Activated CD4-positive, alpha-beta T cell treated with anti-CD3 and anti-CD28 coated beads, Interleukin-2, amount 10 ng/mL, durations not matched to agents 24 days and 14 days (primary cell): ENCODE measurements at regions of chr11 and their contacts with region 1.

Region 1: DNA sequence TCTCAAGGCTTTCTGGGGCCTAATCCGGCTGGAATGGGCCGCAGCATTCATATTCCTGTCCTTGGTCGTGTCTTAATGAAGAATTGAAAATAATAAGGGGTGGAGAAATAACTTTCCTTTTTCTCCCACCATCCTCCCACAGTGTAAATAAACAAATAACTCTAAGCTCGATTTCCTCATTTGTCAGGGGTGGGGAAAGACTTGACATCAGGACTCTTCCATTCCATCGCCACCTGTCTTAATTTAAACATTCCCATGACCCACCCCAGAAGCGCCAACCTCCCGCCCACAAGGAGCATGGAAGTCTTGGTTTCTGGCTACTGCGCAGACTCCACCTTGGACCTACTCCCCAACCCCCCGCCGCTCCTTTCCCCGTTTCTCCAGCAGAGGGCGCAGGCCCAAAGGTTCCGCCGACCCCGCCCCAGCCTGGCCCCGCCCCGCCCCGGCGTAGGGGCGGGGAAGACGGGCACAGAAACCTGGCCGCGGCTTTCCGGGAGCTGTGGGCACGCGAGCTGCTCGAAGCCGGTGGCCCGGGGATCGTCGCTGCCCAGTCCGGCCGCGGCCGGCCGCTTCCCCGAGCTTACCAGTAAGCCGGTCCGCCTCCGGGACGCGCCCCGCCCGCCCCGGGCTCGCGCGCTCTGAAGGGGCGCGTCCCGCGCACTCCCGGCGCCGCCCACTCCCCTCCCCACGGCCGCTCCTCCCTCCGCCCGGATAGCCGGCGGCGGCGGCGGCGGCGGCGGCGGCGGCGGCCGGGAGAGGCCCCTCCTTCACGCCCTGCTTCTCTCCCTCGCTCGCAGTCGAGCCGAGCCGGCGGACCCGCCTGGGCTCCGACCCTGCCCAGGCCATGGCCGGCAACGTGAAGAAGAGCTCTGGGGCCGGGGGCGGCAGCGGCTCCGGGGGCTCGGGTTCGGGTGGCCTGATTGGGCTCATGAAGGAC is at the start of gene CBL:
- DNase-seq: peak; percentile 98
- H3K4me3 Mint-ChIP-seq: peak within 1 kb of the TSS; percentile 99
- H3K27ac Mint-ChIP-seq: peak within 1 kb of the TSS; percentile 93
- H3K4me1 Mint-ChIP-seq: peaks cover 18% of the 10 kb centered on the region
- H3K27me3 Mint-ChIP-seq: no peaks in the 10 kb centered on the region
- total RNA-seq, gene CBL: 36.4 and 36.5 TPM in 2 replicates

Region 2: DNA sequence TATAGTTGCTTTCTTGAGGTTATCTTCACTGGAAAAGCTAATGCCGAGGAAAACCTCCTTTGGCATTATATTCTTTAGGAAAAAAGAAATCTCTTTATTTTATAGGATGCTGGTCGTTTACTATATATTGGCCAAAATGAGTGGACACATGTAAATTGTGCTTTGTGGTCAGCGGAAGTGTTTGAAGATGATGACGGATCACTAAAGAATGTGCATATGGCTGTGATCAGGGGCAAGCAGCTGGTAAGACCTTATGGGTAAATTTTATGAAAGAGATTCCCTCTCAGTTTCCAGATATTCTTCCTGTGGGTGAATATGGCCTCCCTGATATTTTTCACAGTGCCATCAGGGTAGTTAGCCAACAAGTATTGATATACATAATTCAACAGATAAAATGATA is 708.0 kb before region 1 on chr11:
- intact Hi-C with region 1: no loop called
- DNase-seq: no peak
- H3K4me3 Mint-ChIP-seq: no peak overlapping the region
- H3K27ac Mint-ChIP-seq: no peak overlapping the region
- H3K4me1 Mint-ChIP-seq: no peaks in the 10 kb centered on the region
- H3K27me3 Mint-ChIP-seq: no peaks in the 10 kb centered on the region

Region 3: GRCh38 chr11:119218141-119218878 is 12.5 kb after region 1 on chr11:
- intact Hi-C with region 1: loop called (anchors 1 kb)
- DNase-seq: no peak
- H3K4me3 Mint-ChIP-seq: no peak overlapping the region
- H3K27ac Mint-ChIP-seq: peak overlapping the region; percentile 26
- H3K4me1 Mint-ChIP-seq: peaks cover 23% of the 10 kb centered on the region
- H3K27me3 Mint-ChIP-seq: no peaks in the 10 kb centered on the region

Region 4: DNA sequence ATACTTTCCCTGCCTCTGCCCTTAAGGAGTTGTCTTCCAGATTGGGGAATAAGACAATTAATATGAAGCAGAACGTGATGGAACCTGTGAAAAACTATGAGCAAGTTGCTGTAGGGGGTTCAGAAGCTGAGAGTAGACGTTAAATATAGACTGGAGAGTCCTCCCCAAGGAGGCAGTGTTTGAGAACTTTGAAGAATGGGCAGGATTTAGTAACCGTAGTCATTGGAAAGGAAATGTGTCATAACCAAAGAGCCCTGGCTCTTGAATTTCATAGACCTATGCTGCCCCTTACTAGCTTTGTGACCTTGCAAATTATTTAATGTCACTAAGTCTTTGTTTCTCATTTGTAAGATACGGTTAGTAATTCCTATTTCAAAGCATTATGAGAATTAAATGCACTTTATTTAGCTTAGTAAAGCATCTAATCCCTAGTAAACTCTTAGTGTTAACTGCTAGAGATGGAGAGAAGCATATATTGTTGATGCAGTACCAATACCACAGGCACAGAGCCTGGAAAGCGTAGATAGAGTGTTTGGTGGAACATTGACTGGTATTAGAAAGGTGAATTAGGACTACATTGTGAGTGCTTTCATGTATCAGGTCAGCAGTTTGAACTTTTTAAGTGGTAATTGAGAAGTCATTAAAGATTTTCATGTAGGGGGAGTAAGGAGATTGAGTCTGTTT is 57.0 kb after region 1 on chr11:
- intact Hi-C with region 1: loop called (anchors 1 kb)
- DNase-seq: peak; percentile 75
- H3K4me3 Mint-ChIP-seq: no peak overlapping the region
- H3K27ac Mint-ChIP-seq: no peak overlapping the region
- H3K4me1 Mint-ChIP-seq: peaks cover 47% of the 10 kb centered on the region
- H3K27me3 Mint-ChIP-seq: no peaks in the 10 kb centered on the region

Region 5: GRCh38 chr11:119284344-119285157 is 78.7 kb after region 1 on chr11:
- intact Hi-C with region 1: loop called (anchors 1 kb)
- DNase-seq: peak; percentile 78
- H3K4me3 Mint-ChIP-seq: no peak overlapping the region
- H3K27ac Mint-ChIP-seq: peak overlapping the region; percentile 48
- H3K4me1 Mint-ChIP-seq: peaks cover 26% of the 10 kb centered on the region
- H3K27me3 Mint-ChIP-seq: no peaks in the 10 kb centered on the region

Region 6: DNA sequence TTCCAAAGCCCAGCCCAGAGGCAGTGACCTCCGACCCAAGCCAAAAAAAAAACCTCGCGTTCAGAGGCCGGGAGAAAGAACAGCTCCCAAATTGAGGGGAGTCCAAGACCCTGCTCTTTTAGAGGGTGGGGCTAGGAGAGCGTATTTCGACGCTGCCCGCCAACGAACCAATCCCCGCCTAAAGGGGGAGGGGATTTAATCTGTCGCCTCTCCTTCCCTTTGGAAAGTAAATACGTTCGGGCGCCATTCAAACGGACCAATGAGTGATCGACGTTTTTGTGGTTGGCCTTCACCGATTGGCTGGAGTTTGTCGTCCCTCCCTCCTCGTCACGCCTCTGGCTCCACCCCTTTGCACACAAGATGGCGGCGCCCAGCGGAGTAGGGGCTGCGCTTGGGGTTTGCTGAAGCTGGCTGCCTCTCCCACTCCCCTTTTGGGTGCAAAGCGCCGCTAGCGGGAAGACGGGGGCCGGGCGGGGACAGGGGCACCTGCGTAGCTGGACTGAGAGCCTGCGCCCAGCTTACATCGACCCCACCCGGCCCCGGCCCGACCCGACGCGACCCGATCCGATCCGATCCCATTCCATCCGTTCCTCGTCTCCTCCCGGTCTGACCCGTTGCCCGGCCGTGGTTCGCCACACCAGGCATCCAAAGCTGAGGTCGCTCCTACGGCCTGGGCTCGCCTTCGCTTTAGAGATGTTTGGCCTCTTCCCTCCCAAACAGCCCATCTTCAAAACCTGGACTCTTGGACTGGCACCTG is 128.5 kb after region 1 on chr11 and contains the start of gene RNF26:
- intact Hi-C with region 1: loop called (anchors 1 kb)
- DNase-seq: peak; percentile 99
- H3K4me3 Mint-ChIP-seq: peak within 1 kb of the TSS; percentile 95
- H3K27ac Mint-ChIP-seq: peak within 1 kb of the TSS; percentile 99
- H3K4me1 Mint-ChIP-seq: peaks cover 34% of the 10 kb centered on the region
- H3K27me3 Mint-ChIP-seq: peaks cover 23% of the 10 kb centered on the region
- total RNA-seq, gene RNF26: 26.5 and 26.8 TPM in 2 replicates